PC-3 (cell line): ENCODE measurements at regions of chr10 and their contacts with region 1.

Region 1: DNA sequence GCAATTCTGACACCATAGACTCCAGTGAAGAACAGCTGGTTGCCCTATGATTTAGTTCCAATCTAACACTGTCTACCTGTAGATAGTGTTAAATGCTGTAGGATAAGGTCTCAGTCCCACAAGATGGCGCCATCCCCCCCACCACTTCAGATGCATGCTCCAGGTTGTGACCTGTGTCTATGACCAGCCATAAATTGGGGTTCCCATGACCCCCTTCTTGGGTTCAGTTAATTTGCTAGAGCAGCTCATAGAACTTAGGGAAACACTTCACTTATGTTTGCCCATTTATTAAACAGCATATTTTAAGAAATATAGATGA is 13.1 kb downstream of the CCSER2 start:
- DNase-seq: no peak
- ATAC-seq: no peak
- H3K4me3 ChIP-seq: no peak overlapping the region
- H3K27ac ChIP-seq: no peak overlapping the region
- H3K4me1 ChIP-seq: peaks cover 8% of the 10 kb centered on the region; the same call in 1 of the 2 replicates
- H3K27me3 ChIP-seq: no peaks in the 10 kb centered on the region
- CTCF ChIP-seq: peak; percentile 30

Region 2: GRCh38 chr10:84291384-84291783 is 50.1 kb before region 1 on chr10:
- CTCF ChIA-PET with region 1: no interaction called
- POLR2A ChIA-PET with region 1: no interaction called
- intact Hi-C with region 1: no loop called
- DNase-seq: peak; percentile 55
- ATAC-seq: peak; percentile 35; the same call in 1 of the 2 replicates
- H3K4me3 ChIP-seq: no peak overlapping the region
- H3K27ac ChIP-seq: no peak overlapping the region
- H3K4me1 ChIP-seq: no peaks in the 10 kb centered on the region
- H3K27me3 ChIP-seq: peaks cover 5% of the 10 kb centered on the region; the same call in 1 of the 2 replicates
- CTCF ChIP-seq: no peak

Region 3: DNA sequence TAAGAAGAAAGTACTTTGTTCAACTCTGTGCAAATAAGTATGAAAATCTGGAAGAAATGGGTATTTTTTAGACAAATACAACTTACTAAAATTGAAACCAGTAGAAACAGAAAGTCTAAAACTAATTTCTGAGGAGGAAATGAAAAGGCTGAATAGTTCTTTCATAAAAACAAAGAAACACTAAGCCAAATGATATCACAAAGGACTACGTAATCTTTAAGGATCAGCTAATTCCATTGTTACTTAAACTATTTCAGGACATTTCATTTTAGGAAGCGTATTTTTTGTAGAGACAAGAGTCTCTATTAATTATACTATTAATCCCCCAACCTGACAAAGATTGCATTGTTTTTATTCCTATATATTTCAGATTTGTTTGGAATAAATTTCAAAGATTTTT is 24.3 kb before region 1 on chr10:
- CTCF ChIA-PET with region 1: no interaction called
- POLR2A ChIA-PET with region 1: no interaction called
- intact Hi-C with region 1: no loop called
- DNase-seq: no peak
- ATAC-seq: no peak
- H3K4me3 ChIP-seq: no peak overlapping the region
- H3K27ac ChIP-seq: no peak overlapping the region
- H3K4me1 ChIP-seq: 0 out of 2 replicates have a peak, but pooled peaks cover 4% of the 10 kb centered on the region
- H3K27me3 ChIP-seq: no peaks in the 10 kb centered on the region
- CTCF ChIP-seq: no peak

Region 4: DNA sequence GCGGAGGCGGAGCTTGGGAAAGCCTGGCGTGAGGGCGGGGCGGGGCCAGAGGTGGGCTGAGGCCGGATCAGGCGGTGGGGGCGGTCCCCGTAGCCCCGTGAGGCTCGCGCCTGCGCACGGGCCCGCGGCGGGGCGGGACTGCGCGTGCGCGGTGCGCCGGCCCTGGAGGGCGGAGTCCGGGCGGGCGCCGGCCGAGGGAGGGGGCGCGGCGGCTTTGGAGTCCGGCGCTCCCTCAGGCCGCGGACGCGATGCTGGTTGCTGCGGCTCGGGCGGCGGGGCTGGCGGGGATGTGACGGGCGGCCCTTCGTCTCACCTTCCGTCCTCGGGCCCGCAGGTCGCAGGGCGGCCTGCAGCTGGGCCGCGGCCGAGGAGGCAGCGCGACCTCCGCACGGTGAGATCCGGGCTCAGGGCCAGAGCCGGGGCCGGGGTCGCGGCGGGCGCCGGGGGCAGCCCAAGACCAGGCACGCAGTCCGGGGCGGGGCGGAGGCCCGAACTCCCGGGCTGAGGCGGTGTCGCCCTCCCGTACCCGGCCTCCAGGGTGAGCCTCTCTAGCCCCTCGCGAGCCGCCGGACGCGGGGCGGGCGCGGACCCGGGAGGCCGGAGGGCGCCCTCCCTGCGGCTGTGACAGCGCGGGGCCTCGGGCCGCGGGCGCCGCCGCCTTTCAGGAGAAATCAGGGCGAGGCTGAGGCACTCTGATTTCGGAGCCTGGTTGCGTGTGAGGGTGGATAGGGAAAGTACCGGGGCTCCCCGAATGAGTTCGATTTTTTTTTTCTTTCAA is 12.9 kb before region 1 on chr10 and contains the start of gene CCSER2:
- CTCF ChIA-PET with region 1: no interaction called
- POLR2A ChIA-PET with region 1: interaction called, 18 read pairs
- intact Hi-C with region 1: no loop called
- DNase-seq: peak; percentile 13
- ATAC-seq: peak; percentile 87
- H3K4me3 ChIP-seq: peak within 1 kb of the TSS; percentile 96
- H3K27ac ChIP-seq: 0 out of 2 replicates have a peak within 1 kb of the TSS, but pooled peaks have one; percentile 13
- H3K4me1 ChIP-seq: peaks cover 13% of the 10 kb centered on the region; the same call in 1 of the 2 replicates
- H3K27me3 ChIP-seq: no peaks in the 10 kb centered on the region
- CTCF ChIP-seq: no peak
- total RNA-seq, gene CCSER2: 10.2 and 14.1 TPM in 2 replicates